Activated naive CD4-positive, alpha-beta T cell treated with anti-CD3 and anti-CD28 coated beads for 36 hours (primary cell): ENCODE measurements at regions of chr12 and their contacts with region 1.

Region 1: GRCh38 chr12:93785262-93786010 is 108.3 kb downstream of the CRADD start:
- DNase-seq: peak; percentile 77
- H3K4me3 Mint-ChIP-seq: no peak overlapping the region
- H3K27ac Mint-ChIP-seq: peak overlapping the region; percentile 89
- H3K4me1 Mint-ChIP-seq: peaks cover 72% of the 10 kb centered on the region
- H3K27me3 Mint-ChIP-seq: no peaks in the 10 kb centered on the region

Region 2: DNA sequence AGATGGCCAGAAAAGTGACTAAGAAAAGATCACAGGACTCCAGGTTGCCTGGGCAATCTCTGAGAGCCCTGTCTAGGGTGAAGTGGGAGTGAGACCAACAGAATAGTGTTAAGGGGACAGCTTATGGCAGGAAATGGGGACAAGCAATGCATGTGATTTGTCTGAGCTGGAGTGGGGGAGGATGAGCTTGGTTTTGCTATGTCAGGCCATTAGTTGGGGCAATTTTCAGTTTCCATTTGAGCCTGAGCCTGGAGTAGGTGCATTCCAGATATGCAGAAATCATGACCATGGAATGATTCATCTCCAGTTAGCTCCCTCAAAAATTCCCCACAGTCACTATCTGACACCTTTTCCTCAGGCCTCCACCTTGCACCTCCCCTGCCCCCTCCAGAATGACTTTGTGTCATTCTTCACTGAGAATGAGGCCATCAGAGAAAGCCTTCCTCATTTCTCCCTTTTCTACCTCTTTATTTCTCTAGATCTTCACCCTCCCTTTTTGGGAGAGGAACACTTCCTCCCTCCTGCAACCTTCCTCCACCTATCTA is 1233.5 kb before region 1 on chr12:
- CTCF ChIA-PET with region 1: no interaction called
- intact Hi-C with region 1: loop called (anchors 10 kb)
- DNase-seq: peak; percentile 83
- H3K4me3 Mint-ChIP-seq: no peak overlapping the region
- H3K27ac Mint-ChIP-seq: no peak overlapping the region
- H3K4me1 Mint-ChIP-seq: peaks cover 38% of the 10 kb centered on the region
- H3K27me3 Mint-ChIP-seq: no peaks in the 10 kb centered on the region

Region 3: DNA sequence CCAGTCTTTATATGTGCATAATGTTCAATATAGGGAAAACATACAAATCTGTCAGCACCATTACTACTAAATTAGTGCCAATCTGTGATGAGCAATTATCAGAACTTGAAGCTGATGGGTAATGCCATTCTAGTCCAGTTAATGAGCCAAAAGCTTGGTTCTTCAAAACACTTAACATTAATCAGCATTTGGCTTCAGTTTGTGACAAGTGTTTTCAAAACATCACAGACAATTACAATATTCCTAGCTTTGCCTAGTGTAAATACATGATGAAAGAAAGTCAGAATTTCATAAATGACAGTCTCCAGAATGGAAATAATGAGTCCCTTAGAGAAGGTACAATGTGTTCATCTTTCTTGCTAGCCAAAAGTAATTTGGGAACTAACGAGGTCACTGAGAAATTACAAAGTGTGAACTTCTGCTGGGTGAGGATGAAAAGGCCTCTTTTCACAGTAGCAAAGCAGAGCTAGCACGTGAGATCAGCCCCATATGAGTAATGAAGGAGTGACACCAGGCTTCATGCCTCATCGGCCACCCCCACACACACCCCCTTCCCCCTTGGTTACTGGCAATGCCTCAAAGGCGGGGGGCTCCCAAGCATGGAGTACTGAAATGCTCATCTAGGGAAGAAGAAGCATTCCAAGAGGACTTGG is 675.8 kb before region 1 on chr12:
- CTCF ChIA-PET with region 1: no interaction called
- intact Hi-C with region 1: loop called (anchors 5 kb)
- DNase-seq: peak; percentile 83
- H3K4me3 Mint-ChIP-seq: no peak overlapping the region
- H3K27ac Mint-ChIP-seq: peak overlapping the region; percentile 91
- H3K4me1 Mint-ChIP-seq: peaks cover 32% of the 10 kb centered on the region
- H3K27me3 Mint-ChIP-seq: no peaks in the 10 kb centered on the region

Region 4: GRCh38 chr12:93441617-93442410 is 343.6 kb before region 1 on chr12 and contains the start of gene UBE2N:
- CTCF ChIA-PET with region 1: no interaction called
- intact Hi-C with region 1: loop called (anchors 5 kb)
- DNase-seq: peak; percentile 96
- H3K4me3 Mint-ChIP-seq: peak within 1 kb of the TSS; percentile 95
- H3K27ac Mint-ChIP-seq: peak within 1 kb of the TSS; percentile 94
- H3K4me1 Mint-ChIP-seq: peaks cover 46% of the 10 kb centered on the region
- H3K27me3 Mint-ChIP-seq: no peaks in the 10 kb centered on the region
- total RNA-seq, gene UBE2N: 143 TPM

Region 5: DNA sequence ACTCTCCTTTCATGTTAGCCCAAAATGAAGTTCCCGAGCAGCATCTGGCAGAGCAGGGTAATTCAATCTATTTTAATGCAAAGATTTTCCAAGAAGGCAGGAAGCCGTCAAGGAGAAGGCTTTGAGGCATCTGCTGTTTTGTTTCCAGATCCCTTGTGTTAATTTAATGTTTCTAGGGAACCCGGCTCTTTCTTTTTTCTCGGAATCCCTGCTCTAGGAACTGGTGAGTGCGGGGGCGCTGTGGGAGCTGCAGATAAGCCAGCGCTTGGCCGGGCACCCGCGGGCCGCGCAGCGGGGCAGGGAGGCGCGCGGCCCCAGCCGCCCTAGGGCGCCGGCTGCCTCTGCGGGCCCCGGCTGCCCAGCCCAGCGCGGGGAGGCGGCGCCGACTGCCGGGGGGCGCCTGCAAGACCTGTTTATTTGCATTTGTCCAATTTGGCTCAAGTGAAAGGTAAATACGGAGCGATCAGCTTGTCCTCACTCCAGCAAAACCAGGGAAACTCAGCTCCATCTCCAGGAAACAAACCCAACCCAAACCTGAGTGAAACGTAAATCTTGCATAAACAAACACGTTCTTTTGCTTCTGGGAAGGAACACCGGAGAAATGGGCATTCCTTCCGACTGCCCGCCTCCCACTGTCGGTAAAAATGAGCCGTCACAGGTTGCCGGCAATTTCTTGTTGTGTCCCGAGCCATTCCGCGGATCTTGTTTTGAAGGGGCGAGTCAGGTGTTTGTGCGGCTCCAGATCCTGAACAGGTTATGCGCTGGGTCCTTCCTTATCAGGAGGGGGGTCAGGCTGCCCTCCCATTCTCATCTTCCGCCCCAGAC is 43.1 kb before region 1 on chr12:
- CTCF ChIA-PET with region 1: no interaction called
- intact Hi-C with region 1: loop called (anchors 1 kb)
- DNase-seq: peak; percentile 60
- H3K4me3 Mint-ChIP-seq: peak overlapping the region; percentile 76
- H3K27ac Mint-ChIP-seq: peak overlapping the region; percentile 75
- H3K4me1 Mint-ChIP-seq: peaks cover 46% of the 10 kb centered on the region
- H3K27me3 Mint-ChIP-seq: no peaks in the 10 kb centered on the region

Region 6: GRCh38 chr12:94207849-94208621 is 422.6 kb after region 1 on chr12:
- CTCF ChIA-PET with region 1: no interaction called
- intact Hi-C with region 1: loop called (anchors 5 kb)
- DNase-seq: peak; percentile 67
- H3K4me3 Mint-ChIP-seq: peak overlapping the region; percentile 70
- H3K27ac Mint-ChIP-seq: peak overlapping the region; percentile 97
- H3K4me1 Mint-ChIP-seq: peaks cover 62% of the 10 kb centered on the region
- H3K27me3 Mint-ChIP-seq: no peaks in the 10 kb centered on the region